Activated CD4-positive, alpha-beta T cell treated with anti-CD3 and anti-CD28 coated beads, Interleukin-2, amount 10 ng/mL, durations not matched to agents 7 days and 5 days (primary cell): ENCODE measurements at regions of chr11 and their contacts with region 1.

Region 1: GRCh38 chr11:65418711-65419459 is 3.7 kb upstream of the NEAT1 start:
- DNase-seq: peak; percentile 92
- H3K4me3 Mint-ChIP-seq: peak overlapping the region; percentile 91
- H3K27ac Mint-ChIP-seq: peak overlapping the region; percentile 97
- H3K4me1 Mint-ChIP-seq: peaks cover 55% of the 10 kb centered on the region
- H3K27me3 Mint-ChIP-seq: peaks cover 5% of the 10 kb centered on the region

Region 2: DNA sequence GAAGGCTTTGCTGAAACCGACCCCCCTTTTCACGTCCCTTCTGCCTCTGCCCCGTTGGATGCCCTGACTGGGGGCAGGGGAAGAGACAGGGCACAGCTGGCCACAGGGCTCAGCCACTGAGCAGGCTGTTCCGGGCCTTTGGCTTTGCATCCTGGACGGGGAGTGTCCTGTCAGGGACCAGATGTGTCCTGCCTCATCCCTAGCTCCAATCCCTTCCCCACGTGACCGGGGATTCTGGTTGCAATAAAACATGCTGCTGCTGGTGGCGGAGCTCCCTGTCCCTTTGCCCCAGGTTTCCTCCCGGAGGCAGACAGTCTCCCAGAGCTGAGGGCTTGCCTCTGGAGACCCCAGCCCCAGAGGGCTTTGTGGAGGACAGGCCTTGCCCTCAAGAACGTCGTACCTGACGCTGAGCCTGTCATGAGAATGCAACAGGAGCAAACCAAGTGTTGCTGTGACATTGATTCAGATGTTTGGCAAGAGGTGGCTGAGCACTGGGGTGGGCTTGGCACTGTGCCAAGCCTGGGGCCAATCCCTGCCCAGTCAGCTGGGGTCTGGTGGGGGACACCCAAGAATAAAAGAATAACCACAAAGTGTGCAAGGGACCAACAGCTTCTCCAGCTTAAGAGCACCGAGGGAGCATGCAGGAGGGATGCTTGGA is 96.9 kb before region 1 on chr11:
- CTCF ChIA-PET with region 1: no interaction called
- POLR2A ChIA-PET with region 1: no interaction called
- DNase-seq: no peak
- H3K4me3 Mint-ChIP-seq: no peak overlapping the region
- H3K27ac Mint-ChIP-seq: no peak overlapping the region
- H3K4me1 Mint-ChIP-seq: no peaks in the 10 kb centered on the region
- H3K27me3 Mint-ChIP-seq: no peaks in the 10 kb centered on the region

Region 3: DNA sequence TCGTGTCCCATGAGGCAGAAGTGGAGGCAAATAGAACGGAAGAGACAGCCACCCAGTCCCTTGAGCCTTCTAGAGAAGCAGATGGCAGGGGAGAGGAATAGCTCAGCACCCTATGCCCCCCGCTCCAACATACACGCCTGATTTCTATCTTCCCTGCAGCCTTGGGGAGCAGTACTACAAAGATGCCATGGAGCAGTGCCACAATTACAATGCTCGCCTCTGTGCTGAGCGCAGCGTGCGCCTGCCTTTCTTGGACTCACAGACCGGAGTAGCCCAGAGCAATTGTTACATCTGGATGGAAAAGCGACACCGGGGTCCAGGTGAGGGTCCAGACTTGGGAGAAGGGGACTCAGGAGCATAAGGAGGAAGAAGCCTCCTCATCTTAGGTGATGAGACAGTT is 78.7 kb before region 1 on chr11:
- CTCF ChIA-PET with region 1: no interaction called
- POLR2A ChIA-PET with region 1: no interaction called
- DNase-seq: no peak
- H3K4me3 Mint-ChIP-seq: no peak overlapping the region
- H3K27ac Mint-ChIP-seq: no peak overlapping the region
- H3K4me1 Mint-ChIP-seq: peaks cover 22% of the 10 kb centered on the region
- H3K27me3 Mint-ChIP-seq: no peaks in the 10 kb centered on the region

Region 4: GRCh38 chr11:65375012-65375411 is 43.9 kb before region 1 on chr11:
- CTCF ChIA-PET with region 1: interaction called, 20 read pairs
- POLR2A ChIA-PET with region 1: no interaction called
- DNase-seq: no peak
- H3K4me3 Mint-ChIP-seq: no peak overlapping the region
- H3K27ac Mint-ChIP-seq: no peak overlapping the region
- H3K4me1 Mint-ChIP-seq: peaks cover 1% of the 10 kb centered on the region
- H3K27me3 Mint-ChIP-seq: no peaks in the 10 kb centered on the region

Region 5: DNA sequence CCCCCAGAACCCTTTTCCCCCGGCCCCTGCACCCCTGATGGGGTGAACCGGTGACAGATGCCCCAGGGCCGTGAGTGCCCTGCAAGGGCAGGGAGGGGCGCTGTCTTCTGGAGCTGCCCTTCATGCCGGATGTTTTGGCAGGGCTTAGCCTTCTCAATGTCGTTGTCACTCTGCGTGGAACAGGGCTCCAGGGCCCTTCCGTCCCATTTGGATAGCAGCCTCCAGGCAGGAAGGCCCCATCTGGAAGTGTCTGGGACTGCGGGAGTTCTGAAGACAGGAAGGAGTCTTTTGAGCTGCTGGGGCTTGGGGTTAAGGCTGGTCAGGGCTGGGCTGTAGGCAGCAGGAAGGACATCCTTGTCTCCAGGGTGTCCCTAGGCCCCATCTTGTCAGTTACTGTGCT is 27.9 kb before region 1 on chr11:
- CTCF ChIA-PET with region 1: interaction called, 24 read pairs
- POLR2A ChIA-PET with region 1: interaction called, 11 read pairs
- DNase-seq: no peak
- H3K4me3 Mint-ChIP-seq: no peak overlapping the region
- H3K27ac Mint-ChIP-seq: no peak overlapping the region
- H3K4me1 Mint-ChIP-seq: peaks cover 38% of the 10 kb centered on the region
- H3K27me3 Mint-ChIP-seq: no peaks in the 10 kb centered on the region

Region 6: GRCh38 chr11:65471410-65471762 is 52.5 kb after region 1 on chr11:
- CTCF ChIA-PET with region 1: interaction called, 18 read pairs
- POLR2A ChIA-PET with region 1: interaction called, 16 read pairs
- DNase-seq: no peak
- H3K4me3 Mint-ChIP-seq: no peak overlapping the region
- H3K27ac Mint-ChIP-seq: peak overlapping the region; percentile 89
- H3K4me1 Mint-ChIP-seq: peaks cover 36% of the 10 kb centered on the region
- H3K27me3 Mint-ChIP-seq: no peaks in the 10 kb centered on the region

Region 7: DNA sequence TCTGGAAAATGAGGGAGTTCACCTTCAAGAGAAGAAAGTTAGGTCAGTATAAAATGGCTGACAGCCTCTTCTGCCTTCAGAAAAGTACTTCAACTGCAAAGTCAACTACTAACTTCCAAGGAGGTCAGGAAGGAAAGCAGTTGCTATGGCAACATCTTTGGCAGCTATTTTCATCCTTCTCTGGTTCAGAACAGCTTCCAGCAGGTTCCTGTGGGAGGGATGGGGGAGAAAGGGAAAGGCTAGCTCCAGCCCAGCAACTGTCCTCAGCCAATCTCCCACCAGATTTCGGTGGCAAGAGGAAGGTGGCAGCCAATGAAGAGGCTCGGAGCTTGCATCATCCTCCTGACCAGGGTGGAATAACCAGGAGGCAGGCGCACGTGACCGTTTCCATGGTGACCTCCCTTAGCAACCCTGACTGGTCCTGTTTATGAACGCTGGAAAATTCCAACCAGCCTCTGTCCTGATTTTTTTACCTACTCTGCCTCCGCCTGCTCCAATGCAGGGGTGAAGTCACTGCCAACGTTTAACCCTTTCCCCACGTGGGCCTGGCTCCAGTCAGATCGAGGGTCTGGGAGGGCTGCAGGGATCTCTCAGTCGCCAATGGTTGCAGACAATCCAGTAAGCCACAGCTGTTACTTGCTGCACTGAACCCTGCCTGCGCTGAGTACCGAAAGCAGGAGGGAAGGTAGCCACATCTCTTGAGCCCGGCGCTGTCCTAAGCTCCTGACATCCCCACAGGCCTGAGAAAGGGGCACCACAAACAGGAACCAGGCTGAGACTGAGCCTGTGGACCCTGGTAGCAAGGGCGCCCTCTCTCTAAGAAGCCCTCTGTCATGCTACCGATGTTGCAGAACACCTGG is 68.8 kb after region 1 on chr11:
- CTCF ChIA-PET with region 1: interaction called, 13 read pairs
- POLR2A ChIA-PET with region 1: interaction called, 5 read pairs
- DNase-seq: peak; percentile 66
- H3K4me3 Mint-ChIP-seq: no peak overlapping the region
- H3K27ac Mint-ChIP-seq: peak overlapping the region; percentile 71
- H3K4me1 Mint-ChIP-seq: peaks cover 38% of the 10 kb centered on the region
- H3K27me3 Mint-ChIP-seq: peaks cover 5% of the 10 kb centered on the region

Region 8: GRCh38 chr11:65506770-65507505 is 88.1 kb after region 1 on chr11:
- CTCF ChIA-PET with region 1: interaction called, 98 read pairs
- POLR2A ChIA-PET with region 1: interaction called, 781 read pairs
- DNase-seq: peak; percentile 34
- H3K4me3 Mint-ChIP-seq: no peak overlapping the region
- H3K27ac Mint-ChIP-seq: peak overlapping the region; percentile 78
- H3K4me1 Mint-ChIP-seq: peaks cover 54% of the 10 kb centered on the region
- H3K27me3 Mint-ChIP-seq: no peaks in the 10 kb centered on the region